Activated B cell treated with CpG ODN at 0.5 μM for 24 hours (primary cell): ENCODE measurements at regions of chr1 and their contacts with region 1.

Region 1: GRCh38 chr1:29181413-29182225 is at the start of gene SRSF4:
- DNase-seq: peak; percentile 99
- ATAC-seq: peak; percentile 95
- H3K4me3 Mint-ChIP-seq: peak within 1 kb of the TSS; percentile 95
- H3K27ac Mint-ChIP-seq: peak within 1 kb of the TSS; percentile 92
- H3K4me1 Mint-ChIP-seq: peaks cover 45% of the 10 kb centered on the region
- H3K27me3 Mint-ChIP-seq: no peaks in the 10 kb centered on the region
- CTCF ChIP-seq: no peak
- total RNA-seq, gene SRSF4: 80.3 and 92.6 TPM in 2 replicates

Region 2: DNA sequence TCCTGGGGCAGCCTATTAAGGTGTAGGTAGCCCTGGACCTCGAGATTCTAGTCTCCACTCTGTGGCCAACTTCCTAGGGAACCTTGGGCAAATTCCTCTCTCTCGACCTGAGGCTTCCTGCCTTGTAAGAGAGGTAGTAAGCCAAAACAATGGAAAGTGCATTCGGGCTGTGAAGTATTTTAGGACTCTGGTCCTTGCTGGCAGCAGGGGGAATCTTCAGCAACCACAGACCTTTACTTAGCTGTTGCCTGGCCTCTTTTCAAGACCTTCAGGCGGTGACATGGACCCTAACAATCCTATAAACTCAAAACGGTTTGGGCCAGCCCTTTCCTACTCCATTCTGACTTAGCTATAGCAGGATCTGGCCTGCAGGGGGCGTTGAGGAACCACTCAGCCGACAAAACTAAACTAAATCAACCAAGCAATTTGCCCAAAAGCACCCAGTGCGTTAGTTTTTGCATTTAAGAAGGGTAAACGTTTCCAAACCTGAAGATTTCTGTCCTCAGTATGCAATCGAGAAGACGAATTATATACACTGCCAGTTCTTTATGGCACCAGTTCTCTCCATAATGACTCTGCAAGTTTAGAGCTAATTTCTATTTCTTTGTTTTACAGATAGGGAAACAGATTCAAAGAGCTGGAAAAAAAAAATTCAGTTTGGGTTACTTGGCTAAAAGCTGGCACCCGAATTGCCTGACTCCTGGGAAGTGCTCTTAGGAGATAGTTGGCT is 933.2 kb before region 1 on chr1:
- CTCF ChIA-PET with region 1: no interaction called
- POLR2A ChIA-PET with region 1: no interaction called
- intact Hi-C with region 1: loop called (anchors 5 kb)
- DNase-seq: peak; percentile 69
- ATAC-seq: peak; percentile 23
- H3K4me3 Mint-ChIP-seq: peak overlapping the region; percentile 72
- H3K27ac Mint-ChIP-seq: peak overlapping the region; percentile 99
- H3K4me1 Mint-ChIP-seq: peaks cover 58% of the 10 kb centered on the region
- H3K27me3 Mint-ChIP-seq: no peaks in the 10 kb centered on the region
- CTCF ChIP-seq: peak; percentile 57

Region 3: GRCh38 chr1:28581536-28582247 is 599.9 kb before region 1 on chr1:
- CTCF ChIA-PET with region 1: no interaction called
- POLR2A ChIA-PET with region 1: interaction called, 9 read pairs
- intact Hi-C with region 1: loop called (anchors 5 kb)
- DNase-seq: peak; percentile 94
- ATAC-seq: peak; percentile 90
- H3K4me3 Mint-ChIP-seq: peak overlapping the region; percentile 96
- H3K27ac Mint-ChIP-seq: peak overlapping the region; percentile 91
- H3K4me1 Mint-ChIP-seq: peaks cover 48% of the 10 kb centered on the region
- H3K27me3 Mint-ChIP-seq: no peaks in the 10 kb centered on the region
- CTCF ChIP-seq: no peak

Region 4: GRCh38 chr1:28736450-28737306 is 444.9 kb before region 1 on chr1 and contains the start of gene YTHDF2:
- CTCF ChIA-PET with region 1: interaction called, 7 read pairs
- POLR2A ChIA-PET with region 1: interaction called, 29 read pairs
- intact Hi-C with region 1: loop called (anchors 1 kb)
- DNase-seq: peak; percentile 96
- ATAC-seq: peak; percentile 93
- H3K4me3 Mint-ChIP-seq: peak within 1 kb of the TSS; percentile 96
- H3K27ac Mint-ChIP-seq: peak within 1 kb of the TSS; percentile 91
- H3K4me1 Mint-ChIP-seq: peaks cover 30% of the 10 kb centered on the region
- H3K27me3 Mint-ChIP-seq: no peaks in the 10 kb centered on the region
- CTCF ChIP-seq: peak; percentile 83
- total RNA-seq, gene YTHDF2: 70.6 and 81.2 TPM in 2 replicates

Region 5: GRCh38 chr1:29112705-29113412 is 68.8 kb before region 1 on chr1:
- CTCF ChIA-PET with region 1: no interaction called
- POLR2A ChIA-PET with region 1: interaction called, 11 read pairs
- intact Hi-C with region 1: no loop called
- DNase-seq: no peak
- ATAC-seq: no peak
- H3K4me3 Mint-ChIP-seq: no peak overlapping the region
- H3K27ac Mint-ChIP-seq: no peak overlapping the region
- H3K4me1 Mint-ChIP-seq: no peaks in the 10 kb centered on the region
- H3K27me3 Mint-ChIP-seq: no peaks in the 10 kb centered on the region
- CTCF ChIP-seq: no peak

Region 6: DNA sequence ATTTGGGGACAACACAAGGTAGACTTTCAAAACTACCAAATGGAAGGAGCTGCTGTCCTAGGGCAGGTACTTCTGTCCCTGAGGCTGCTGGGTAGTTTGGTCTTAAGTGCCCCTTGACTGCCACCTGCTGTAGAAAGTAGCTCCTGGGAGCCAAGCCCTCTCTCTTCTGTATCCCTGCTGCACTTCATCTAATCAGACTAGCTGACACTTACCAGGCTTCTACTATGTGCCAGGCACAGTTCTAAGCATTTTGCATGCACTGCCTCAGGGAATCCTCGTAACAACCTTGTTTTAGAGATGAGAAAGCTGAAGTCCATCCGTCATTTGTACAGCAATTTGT is 15.9 kb after region 1 on chr1:
- CTCF ChIA-PET with region 1: interaction called, 25 read pairs
- POLR2A ChIA-PET with region 1: interaction called, 8 read pairs
- intact Hi-C with region 1: no loop called
- DNase-seq: no peak
- ATAC-seq: peak; percentile 90
- H3K4me3 Mint-ChIP-seq: no peak overlapping the region
- H3K27ac Mint-ChIP-seq: no peak overlapping the region
- H3K4me1 Mint-ChIP-seq: peaks cover under 1% of the 10 kb centered on the region
- H3K27me3 Mint-ChIP-seq: no peaks in the 10 kb centered on the region
- CTCF ChIP-seq: no peak

Region 7: GRCh38 chr1:29218223-29218622 is 36.6 kb after region 1 on chr1:
- CTCF ChIA-PET with region 1: no interaction called
- POLR2A ChIA-PET with region 1: no interaction called
- intact Hi-C with region 1: no loop called
- DNase-seq: no peak
- ATAC-seq: no peak
- H3K4me3 Mint-ChIP-seq: no peak overlapping the region
- H3K27ac Mint-ChIP-seq: no peak overlapping the region
- H3K4me1 Mint-ChIP-seq: no peaks in the 10 kb centered on the region
- H3K27me3 Mint-ChIP-seq: no peaks in the 10 kb centered on the region
- CTCF ChIP-seq: no peak

Region 8: GRCh38 chr1:30718636-30719405 is 1537.2 kb after region 1 on chr1:
- CTCF ChIA-PET with region 1: no interaction called
- POLR2A ChIA-PET with region 1: no interaction called
- intact Hi-C with region 1: loop called (anchors 5 kb)
- DNase-seq: peak; percentile 87
- ATAC-seq: peak; percentile 66
- H3K4me3 Mint-ChIP-seq: peak overlapping the region; percentile 87
- H3K27ac Mint-ChIP-seq: peak overlapping the region; percentile 91
- H3K4me1 Mint-ChIP-seq: peaks cover 42% of the 10 kb centered on the region
- H3K27me3 Mint-ChIP-seq: no peaks in the 10 kb centered on the region
- CTCF ChIP-seq: peak; percentile 92